ENCODE measurements at regions of chr12 and their contacts with region 1.

Region 1: GRCh38 chr12:3299929-3300832 is 190.8 kb upstream of the PRMT8 start:
- DNase-seq: peak; percentile 74
- ATAC-seq: peak; percentile 81
- H3K4me3 ChIP-seq: peak overlapping the region in 1 of 2 experiments; percentile 40; a peak in 2 of 4 replicates
- H3K27ac ChIP-seq: no peak overlapping the region
- H3K4me1 ChIP-seq: peaks cover 4% of the 10 kb centered on the region; the same call in 1 of the 2 replicates
- H3K27me3 ChIP-seq: no peaks in the 10 kb centered on the region
- CTCF ChIP-seq: peak; percentile 85

Region 2: DNA sequence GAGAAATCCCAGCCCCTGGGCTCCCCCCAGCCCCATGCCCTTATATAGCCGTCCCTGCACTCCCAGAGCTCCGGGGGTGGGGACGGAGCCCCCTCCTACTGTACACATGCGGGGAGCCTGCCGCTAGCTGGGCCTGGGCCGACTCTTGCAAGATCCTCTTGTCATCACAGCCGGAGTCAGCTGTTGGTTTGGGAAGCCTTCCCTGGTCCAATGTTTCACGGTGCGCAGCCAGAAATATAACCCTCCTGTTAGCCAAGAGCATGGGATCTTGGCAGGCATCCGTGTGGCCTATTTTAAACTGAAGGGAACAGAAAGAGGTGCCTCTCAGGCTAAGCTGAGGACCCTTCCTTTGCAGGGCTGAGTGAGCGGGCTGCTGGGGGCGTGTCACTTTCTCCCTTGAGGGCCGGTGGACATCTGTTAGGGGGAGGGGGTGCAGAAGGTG is 47.7 kb before region 1 on chr12:
- CTCF ChIA-PET with region 1: no interaction called
- POLR2A ChIA-PET with region 1: no interaction called
- in situ Hi-C with region 1: no loop called
- intact Hi-C with region 1: no loop called
- DNase-seq: no peak
- ATAC-seq: no peak
- H3K4me3 ChIP-seq: no peak overlapping the region
- H3K27ac ChIP-seq: no peak overlapping the region
- H3K4me1 ChIP-seq: no peaks in the 10 kb centered on the region
- H3K27me3 ChIP-seq: no peaks in the 10 kb centered on the region
- CTCF ChIP-seq: no peak

Region 3: GRCh38 chr12:3453990-3454675 is 154.0 kb after region 1 on chr12:
- CTCF ChIA-PET with region 1: interaction called, 3 read pairs
- POLR2A ChIA-PET with region 1: no interaction called
- in situ Hi-C with region 1: no loop called
- intact Hi-C with region 1: loop called (anchors 10 kb)
- DNase-seq: no peak
- ATAC-seq: no peak
- H3K4me3 ChIP-seq: no peak overlapping the region
- H3K27ac ChIP-seq: no peak overlapping the region
- H3K4me1 ChIP-seq: no peaks in the 10 kb centered on the region
- H3K27me3 ChIP-seq: no peaks in the 10 kb centered on the region
- CTCF ChIP-seq: no peak

Region 4: GRCh38 chr12:3777206-3777809 is 477.1 kb after region 1 on chr12:
- CTCF ChIA-PET with region 1: interaction called, 5 read pairs
- POLR2A ChIA-PET with region 1: no interaction called
- in situ Hi-C with region 1: no loop called
- intact Hi-C with region 1: loop called (anchors 2 kb)
- DNase-seq: peak; percentile 28
- ATAC-seq: peak; percentile 68; the same call in 1 of the 2 replicates
- H3K4me3 ChIP-seq: no peak overlapping the region
- H3K27ac ChIP-seq: no peak overlapping the region
- H3K4me1 ChIP-seq: no peaks in the 10 kb centered on the region
- H3K27me3 ChIP-seq: peaks cover 5% of the 10 kb centered on the region; the same call in 1 of the 2 replicates
- CTCF ChIP-seq: peak; percentile 66

Region 5: GRCh38 chr12:3803865-3804472 is 503.8 kb after region 1 on chr12:
- CTCF ChIA-PET with region 1: interaction called, 10 read pairs
- POLR2A ChIA-PET with region 1: no interaction called
- in situ Hi-C with region 1: no loop called
- intact Hi-C with region 1: loop called (anchors 10 kb)
- DNase-seq: peak; percentile 54
- ATAC-seq: peak; percentile 88
- H3K4me3 ChIP-seq: no peak overlapping the region
- H3K27ac ChIP-seq: no peak overlapping the region
- H3K4me1 ChIP-seq: no peaks in the 10 kb centered on the region
- H3K27me3 ChIP-seq: no peaks in the 10 kb centered on the region
- CTCF ChIP-seq: peak; percentile 83

Measured in Panc1 (cell line).